Left cardiac atrium (tissue), 4 donors: ENCODE measurements at regions of chr12 and their contacts with region 1.

Region 1: GRCh38 chr12:57983146-57983857 is 41.9 kb downstream of the ATP23 start:
- DNase-seq: peak; percentile 34
- ATAC-seq: peak; percentile 34 to 36

Region 2: DNA sequence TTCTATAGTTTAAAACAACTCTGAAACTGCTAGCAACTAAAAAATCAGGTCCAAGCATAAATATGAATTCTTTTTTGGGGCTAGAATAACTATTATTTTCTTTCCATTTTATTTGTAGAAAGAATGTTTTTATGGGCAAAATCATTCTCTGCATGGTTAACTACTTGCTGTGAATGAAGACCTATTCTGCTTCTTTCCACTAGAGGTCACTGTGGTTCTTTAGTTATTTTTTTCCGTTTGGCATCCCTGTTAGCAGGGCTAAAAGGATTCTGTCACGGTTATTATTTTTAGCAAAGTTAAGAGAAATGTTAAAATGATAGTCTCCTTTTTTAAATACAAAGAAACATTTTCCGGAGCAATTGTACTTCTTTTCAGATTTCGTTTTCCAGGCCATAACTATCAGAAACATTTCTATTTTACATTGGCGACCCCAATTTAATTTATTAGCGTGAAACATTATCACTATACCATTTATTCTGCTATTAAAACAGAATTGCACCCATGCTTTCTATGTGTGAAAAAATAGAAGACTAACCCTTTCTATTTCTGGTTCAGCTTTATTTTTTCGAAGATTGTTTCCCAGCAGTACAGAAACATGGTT is 362.8 kb after region 1 on chr12:
- intact Hi-C with region 1: loop called in 1 of 2 experiments (anchors 5 kb)
- DNase-seq: no peak
- ATAC-seq: peak in 1 of 2 donors; percentile 61

Region 3: DNA sequence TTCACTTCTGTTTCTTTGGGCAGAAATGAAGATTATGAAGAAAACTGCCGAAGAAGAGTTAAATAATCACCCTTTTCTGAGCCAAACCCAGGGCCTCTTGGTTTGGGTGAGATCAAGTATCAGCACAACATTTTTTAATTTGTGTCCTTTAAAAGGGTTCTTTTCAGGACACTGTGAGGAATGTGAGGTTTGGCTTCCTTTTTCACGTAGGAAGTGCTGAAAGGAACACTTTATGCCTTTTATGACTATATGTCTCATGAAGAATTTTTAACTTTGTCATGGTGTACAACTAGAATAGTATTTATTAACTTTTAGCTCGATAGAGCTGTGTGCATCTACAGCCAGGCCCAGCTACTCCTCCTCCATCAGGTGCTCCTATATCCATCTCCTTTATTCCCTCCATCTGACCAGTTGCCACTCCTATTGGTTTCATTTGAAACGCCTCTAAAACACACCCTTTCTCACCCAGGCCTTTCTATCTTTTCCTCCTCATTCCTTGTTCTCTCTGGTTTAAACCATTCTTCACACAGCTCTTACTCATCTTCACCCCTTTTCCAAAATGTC is 1040.6 kb after region 1 on chr12:
- intact Hi-C with region 1: loop called in 1 of 2 experiments (anchors 5 kb)
- DNase-seq: no peak
- ATAC-seq: no peak

Region 4: GRCh38 chr12:59164991-59165718 is 1181.9 kb after region 1 on chr12:
- intact Hi-C with region 1: loop called in 1 of 2 experiments (anchors 10 kb)
- DNase-seq: no peak
- ATAC-seq: no peak